ENCODE measurements at regions of chr16 and their contacts with region 1.

Region 1: GRCh38 chr16:69396187-69397061 is 10.6 kb upstream of the TERF2 start:
- DNase-seq: peak; percentile 89
- H3K4me3 ChIP-seq: no peak overlapping the region
- H3K27ac ChIP-seq: peak overlapping the region; percentile 22 to 86
- H3K4me1 ChIP-seq: peaks cover 7% of the 10 kb centered on the region
- H3K27me3 ChIP-seq: no peaks in the 10 kb centered on the region
- CTCF ChIP-seq: peak; percentile 85 to 90 (median 87)
- POLR2A ChIP-seq: no peak

Region 2: GRCh38 chr16:69535123-69536050 is 139.0 kb after region 1 on chr16:
- intact Hi-C with region 1: no loop called
- DNase-seq: no peak
- H3K4me3 ChIP-seq: no peak overlapping the region
- H3K27ac ChIP-seq: no peak overlapping the region
- H3K4me1 ChIP-seq: peaks cover 5% of the 10 kb centered on the region
- H3K27me3 ChIP-seq: no peaks in the 10 kb centered on the region
- CTCF ChIP-seq: no peak
- POLR2A ChIP-seq: no peak

Region 3: DNA sequence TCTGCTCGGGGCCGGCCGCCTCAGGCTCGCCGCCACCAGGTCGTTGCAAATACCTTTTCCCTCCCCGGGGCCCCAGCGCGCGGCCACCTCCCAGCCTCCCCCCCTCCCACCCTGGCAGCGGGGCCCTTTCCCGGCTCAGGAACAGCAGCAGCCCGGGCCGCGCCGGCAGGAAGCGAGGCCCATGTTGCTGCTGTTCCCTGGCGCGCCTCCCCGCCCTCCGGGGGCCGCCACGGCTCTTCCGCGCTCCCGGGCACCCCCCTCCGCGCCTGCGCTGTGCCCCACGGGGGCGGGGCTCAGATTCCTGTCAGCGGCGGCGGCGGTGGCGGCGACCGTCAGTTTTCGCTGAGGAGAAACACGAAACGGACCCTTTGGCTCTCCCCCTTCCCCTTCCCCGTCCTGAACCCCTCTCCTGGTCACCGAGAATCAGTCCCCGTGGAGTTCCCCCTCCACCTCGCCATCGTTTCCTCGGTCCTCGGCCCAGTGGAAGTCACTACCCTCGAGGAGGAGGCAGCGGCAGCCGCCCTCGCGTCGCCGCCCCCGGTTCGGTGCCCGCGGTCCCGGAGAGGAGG is 169.3 kb after region 1 on chr16 and contains the start of gene NFAT5:
- intact Hi-C with region 1: no loop called
- DNase-seq: peak; percentile 94
- H3K4me3 ChIP-seq: peak within 1 kb of the TSS; percentile 92 to 98
- H3K27ac ChIP-seq: peak within 1 kb of the TSS; percentile 93 to 99
- H3K4me1 ChIP-seq: peaks cover 19% of the 10 kb centered on the region
- H3K27me3 ChIP-seq: no peaks in the 10 kb centered on the region
- CTCF ChIP-seq: peak in 1 of 3 experiments; percentile 2
- POLR2A ChIP-seq: peak; percentile 59
- total RNA-seq, gene NFAT5: 72.4 to 101 TPM

Region 4: DNA sequence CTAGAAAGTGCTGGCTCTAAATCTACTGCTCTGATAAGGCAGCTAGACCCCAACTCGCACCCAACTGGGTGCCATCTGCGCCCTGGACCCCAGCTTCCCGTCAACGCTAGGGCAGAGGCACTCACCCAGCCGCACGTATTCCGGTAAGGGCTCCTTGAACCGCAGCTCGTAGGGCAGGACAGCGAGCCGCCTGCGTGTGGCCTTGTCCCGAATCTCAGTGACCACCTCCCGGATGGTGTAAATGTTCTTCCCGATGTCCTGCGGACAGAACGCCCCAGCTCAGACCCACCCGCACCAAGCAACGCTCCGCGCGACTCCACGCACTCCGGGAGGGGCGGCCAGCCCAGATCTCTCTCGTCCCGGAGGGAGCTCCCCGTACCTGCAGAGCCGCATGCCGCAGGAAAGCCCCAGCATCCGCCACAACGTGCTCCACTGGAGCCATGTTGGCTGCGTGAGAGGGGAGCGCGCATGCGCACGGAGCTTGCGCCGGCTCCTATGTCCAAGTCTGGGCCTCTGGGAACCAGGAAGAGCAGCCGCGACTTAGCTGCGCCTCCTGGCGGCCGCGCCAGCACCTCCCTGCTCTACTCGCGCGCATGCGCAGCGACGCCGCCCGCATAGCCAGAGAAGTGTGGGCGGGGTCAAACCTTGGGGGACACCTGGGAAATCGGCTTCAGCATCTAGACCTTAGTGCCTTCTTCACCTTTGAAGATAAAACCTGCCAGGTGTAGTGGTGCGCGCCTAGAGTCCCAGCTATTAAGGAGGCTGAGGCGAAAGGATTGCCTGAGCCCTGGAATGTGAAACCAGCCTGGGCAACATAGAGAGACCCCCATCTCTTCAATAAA is 358.3 kb after region 1 on chr16 and contains the start of gene NOB1:
- intact Hi-C with region 1: loop called (anchors 10 kb)
- DNase-seq: peak; percentile 97
- H3K4me3 ChIP-seq: peak within 1 kb of the TSS; percentile 74 to 97
- H3K27ac ChIP-seq: peak within 1 kb of the TSS; percentile 44 to 62
- H3K4me1 ChIP-seq: peaks cover 14% of the 10 kb centered on the region
- H3K27me3 ChIP-seq: no peaks in the 10 kb centered on the region
- CTCF ChIP-seq: peak; percentile 93 to 100 (median 99)
- POLR2A ChIP-seq: no peak
- total RNA-seq, gene NOB1: 29.5 to 42.6 TPM